Posterior vena cava (tissue), 2 donors: ENCODE measurements at regions of chr17 and their contacts with region 1.

Region 1: GRCh38 chr17:38415250-38416194 is 12.7 kb upstream of the ARHGAP23 start:
- DNase-seq: no peak

Region 2: GRCh38 chr17:38351412-38352222 is 63.9 kb before region 1 on chr17 and contains the start of gene SOCS7:
- intact Hi-C with region 1: loop called (anchors 2 to 5 kb)
- DNase-seq: peak; percentile 98
- total RNA-seq, gene SOCS7: 12.2 to 15.3 TPM

Region 3: GRCh38 chr17:38617011-38617867 is 201.7 kb after region 1 on chr17:
- intact Hi-C with region 1: no loop called
- DNase-seq: peak; percentile 45